CD4-positive, alpha-beta T cell (primary cell): ENCODE measurements at regions of chr6 and their contacts with region 1.

Region 1: DNA sequence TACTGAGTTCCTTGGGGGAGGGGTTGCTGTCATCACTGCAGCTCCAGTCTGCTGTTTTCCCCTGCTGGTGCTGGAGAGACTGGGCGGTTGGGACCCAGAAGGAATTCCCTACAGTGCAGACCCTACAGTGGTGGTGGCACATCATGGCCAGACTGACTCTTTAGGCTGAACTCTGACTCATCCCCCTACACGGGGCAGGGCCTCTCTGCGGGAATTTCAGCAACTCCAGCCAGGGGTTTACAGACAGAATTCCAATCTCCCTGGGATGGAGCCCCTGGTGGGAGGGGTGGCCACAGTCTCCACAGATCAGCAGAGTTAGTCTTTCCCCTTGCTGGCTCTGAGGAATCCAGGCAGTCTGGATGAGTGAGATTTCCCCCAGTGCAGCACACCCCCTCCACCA is 46.9 kb upstream of the MAPK13 start:
- DNase-seq: no peak
- ATAC-seq: no peak
- H3K4me3 ChIP-seq: no peak overlapping the region
- H3K4me3 Mint-ChIP-seq: no peak overlapping the region
- H3K27ac ChIP-seq: no peak overlapping the region
- H3K27ac Mint-ChIP-seq: no peak overlapping the region
- H3K4me1 ChIP-seq: no peaks in the 10 kb centered on the region
- H3K4me1 Mint-ChIP-seq: peaks cover 9% of the 10 kb centered on the region
- H3K27me3 ChIP-seq: no peaks in the 10 kb centered on the region
- H3K27me3 Mint-ChIP-seq: no peaks in the 10 kb centered on the region
- CTCF ChIP-seq: no peak

Region 2: GRCh38 chr6:36049582-36049981 is 33.9 kb before region 1 on chr6:
- CTCF ChIA-PET with region 1: no interaction called
- POLR2A ChIA-PET with region 1: no interaction called
- intact Hi-C with region 1: loop called in 1 of 2 experiments (anchors 5 kb)
- DNase-seq: no peak
- ATAC-seq: no peak
- H3K4me3 ChIP-seq: no peak overlapping the region
- H3K4me3 Mint-ChIP-seq: no peak overlapping the region
- H3K27ac ChIP-seq: no peak overlapping the region
- H3K27ac Mint-ChIP-seq: no peak overlapping the region
- H3K4me1 ChIP-seq: peaks cover 27% of the 10 kb centered on the region
- H3K4me1 Mint-ChIP-seq: peaks cover 17% of the 10 kb centered on the region
- H3K27me3 ChIP-seq: no peaks in the 10 kb centered on the region
- H3K27me3 Mint-ChIP-seq: no peaks in the 10 kb centered on the region
- CTCF ChIP-seq: no peak